HCT116 (cell line): ENCODE measurements at regions of chr15 and their contacts with region 1.

Region 1: DNA sequence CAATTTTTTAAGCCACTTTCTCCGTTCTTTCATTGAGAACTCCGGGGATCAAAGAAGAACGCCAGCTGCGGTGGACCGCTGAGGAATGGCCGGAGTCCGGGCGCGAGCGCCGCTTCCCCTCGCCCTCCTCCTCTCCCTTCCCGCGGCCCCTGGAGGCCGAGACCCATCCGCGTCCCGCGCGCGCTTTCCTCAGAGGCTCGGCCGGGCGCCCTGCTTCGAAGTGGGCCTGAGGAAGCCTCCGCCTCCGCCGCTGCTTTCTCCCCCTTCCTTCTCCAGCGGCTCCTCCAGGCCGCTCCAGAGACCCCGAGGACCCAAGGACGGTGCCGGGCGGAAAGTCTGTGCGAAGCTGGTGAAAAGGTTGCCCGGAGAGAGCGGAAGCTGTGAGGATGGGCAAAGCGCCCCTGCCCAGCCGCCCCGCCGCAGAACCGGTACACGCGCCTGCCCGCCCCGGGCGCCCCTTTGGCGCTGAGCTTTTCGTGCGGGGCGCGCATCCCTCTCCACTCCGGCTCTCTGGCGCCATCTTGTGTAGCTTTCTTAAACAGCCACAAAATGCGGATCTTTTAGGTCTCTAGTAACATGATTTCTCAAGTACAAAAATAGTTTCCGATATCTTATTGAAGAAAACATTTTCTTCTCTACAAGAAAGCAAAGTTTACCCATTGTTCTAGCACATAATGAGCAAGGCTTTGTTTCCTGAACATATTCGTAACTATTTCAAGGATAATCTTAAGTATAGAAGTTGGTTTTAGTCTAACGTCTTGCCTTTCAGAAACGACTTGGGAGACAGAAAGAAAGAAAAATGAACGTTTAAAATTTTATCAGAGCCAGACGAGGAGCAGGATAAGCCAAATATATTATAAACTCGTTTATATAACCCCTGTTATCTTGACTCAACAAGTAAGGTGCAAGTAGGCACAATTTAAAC is 59.2 kb upstream of the FAM174B start:
- DNase-seq: peak; percentile 33
- ATAC-seq: peak; percentile 94
- H3K4me3 ChIP-seq: peak overlapping the region in 1 of 2 experiments; percentile 0; a peak in 1 of 4 replicates
- H3K27ac ChIP-seq: no peak overlapping the region
- H3K4me1 ChIP-seq: 0 out of 4 replicates have a peak, but pooled peaks cover 0 to 3% of the 10 kb centered on the region in 2 experiments
- H3K27me3 ChIP-seq: no peaks in the 10 kb centered on the region
- CTCF ChIP-seq: peak; percentile 82 to 93 (median 83)
- POLR2A ChIP-seq: no peak
- RAD21 ChIP-seq: peak; percentile 89

Region 2: DNA sequence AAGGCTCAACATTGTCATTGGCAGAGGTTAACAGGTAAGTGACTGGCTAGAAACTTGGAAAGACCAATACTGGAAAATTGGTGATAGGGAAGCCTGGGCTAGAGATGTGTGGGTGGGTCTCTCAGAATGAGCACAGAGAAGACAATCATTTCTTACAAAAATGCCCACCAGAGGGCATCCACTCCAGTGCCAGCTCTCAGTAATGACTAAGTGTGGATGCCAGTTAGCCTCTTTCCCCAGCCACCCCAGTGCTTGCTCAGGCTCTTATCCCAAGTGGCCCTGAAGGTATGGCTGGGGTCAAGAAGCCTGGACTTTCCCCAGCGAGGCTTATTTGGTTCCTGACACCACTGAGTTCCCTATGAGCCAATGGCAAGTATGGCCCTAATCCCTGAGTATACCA is 437.0 kb before region 1 on chr15:
- CTCF ChIA-PET with region 1: no interaction called
- POLR2A ChIA-PET with region 1: no interaction called
- RAD21 ChIA-PET with region 1: no interaction called
- intact Hi-C with region 1: loop called (anchors 2 kb)
- DNase-seq: peak; percentile 12
- ATAC-seq: peak; percentile 91
- H3K4me3 ChIP-seq: no peak overlapping the region
- H3K27ac ChIP-seq: no peak overlapping the region
- H3K4me1 ChIP-seq: no peaks in the 10 kb centered on the region
- H3K27me3 ChIP-seq: peaks cover 39% of the 10 kb centered on the region; the same call in 1 of the 2 replicates
- CTCF ChIP-seq: peak; percentile 26 to 47 (median 43); a peak in 4 of 6 replicates
- POLR2A ChIP-seq: no peak
- RAD21 ChIP-seq: peak; percentile 28; the same call in 1 of the 2 replicates

Region 3: GRCh38 chr15:92391640-92392039 is 323.1 kb before region 1 on chr15:
- CTCF ChIA-PET with region 1: interaction called, 12 read pairs
- POLR2A ChIA-PET with region 1: no interaction called
- RAD21 ChIA-PET with region 1: no interaction called
- intact Hi-C with region 1: loop called (anchors 1 kb)
- DNase-seq: peak; percentile 36
- ATAC-seq: peak; percentile 95
- H3K4me3 ChIP-seq: no peak overlapping the region
- H3K27ac ChIP-seq: no peak overlapping the region
- H3K4me1 ChIP-seq: no peaks in the 10 kb centered on the region
- H3K27me3 ChIP-seq: peaks cover 47% of the 10 kb centered on the region; the same call in 1 of the 2 replicates
- CTCF ChIP-seq: peak; percentile 68 to 80 (median 71)
- POLR2A ChIP-seq: no peak
- RAD21 ChIP-seq: peak; percentile 62

Region 4: DNA sequence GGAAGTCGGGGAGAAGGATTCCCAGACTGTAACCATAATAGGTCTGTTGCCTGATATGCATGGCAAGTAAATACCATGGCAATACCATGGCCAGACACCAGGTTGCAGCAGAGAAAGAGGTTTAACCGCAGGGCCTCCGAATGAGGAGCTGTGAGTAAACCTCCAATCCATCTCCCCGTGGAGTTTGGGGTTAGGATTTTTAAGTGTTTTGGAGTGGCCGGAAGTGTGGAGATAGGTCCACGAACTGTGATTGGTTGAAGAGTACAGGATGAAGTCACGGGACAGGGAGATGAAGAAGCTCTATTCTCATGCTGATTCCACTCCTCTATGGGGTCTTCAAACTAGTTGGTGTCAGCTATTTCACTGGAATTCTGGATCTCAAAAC is 193.1 kb before region 1 on chr15:
- CTCF ChIA-PET with region 1: interaction called, 27 read pairs
- POLR2A ChIA-PET with region 1: no interaction called
- RAD21 ChIA-PET with region 1: interaction called, 3 to 6 read pairs
- intact Hi-C with region 1: loop called (anchors 1 kb)
- DNase-seq: peak; percentile 46
- ATAC-seq: peak; percentile 99
- H3K4me3 ChIP-seq: no peak overlapping the region
- H3K27ac ChIP-seq: no peak overlapping the region
- H3K4me1 ChIP-seq: no peaks in the 10 kb centered on the region
- H3K27me3 ChIP-seq: no peaks in the 10 kb centered on the region
- CTCF ChIP-seq: peak; percentile 53 to 70 (median 67); a peak in 5 of 6 replicates
- POLR2A ChIP-seq: no peak
- RAD21 ChIP-seq: peak; percentile 79

Region 5: GRCh38 chr15:92693691-92694331 is 20.9 kb before region 1 on chr15:
- CTCF ChIA-PET with region 1: interaction called, 3 read pairs
- POLR2A ChIA-PET with region 1: no interaction called
- RAD21 ChIA-PET with region 1: interaction called, 3 read pairs
- intact Hi-C with region 1: loop called (anchors 1 kb)
- DNase-seq: peak; percentile 34
- ATAC-seq: peak; percentile 99
- H3K4me3 ChIP-seq: no peak overlapping the region
- H3K27ac ChIP-seq: no peak overlapping the region
- H3K4me1 ChIP-seq: no peaks in the 10 kb centered on the region
- H3K27me3 ChIP-seq: peaks cover 6% of the 10 kb centered on the region; the same call in 1 of the 2 replicates
- CTCF ChIP-seq: peak; percentile 40 to 82 (median 67); a peak in 5 of 6 replicates
- POLR2A ChIP-seq: no peak
- RAD21 ChIP-seq: peak; percentile 48

Region 6: DNA sequence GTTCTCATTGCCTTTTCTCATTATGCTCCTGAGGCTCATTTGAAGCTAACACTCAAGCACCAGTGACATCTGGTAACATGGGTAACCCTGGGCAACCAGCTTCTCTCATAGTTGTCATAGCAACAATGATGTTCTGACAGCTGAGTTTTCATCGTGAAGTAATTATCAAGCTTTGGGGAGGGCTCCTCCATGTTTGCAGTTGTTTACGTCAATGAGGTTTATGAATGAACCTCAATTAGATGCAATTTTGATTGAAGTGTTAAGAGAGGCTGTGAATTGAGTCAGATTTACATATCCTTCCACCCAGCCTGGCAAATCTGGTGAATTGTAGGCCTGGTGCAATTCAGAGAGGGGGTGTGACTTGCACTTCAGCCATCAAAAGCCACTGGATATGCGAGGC is 66.1 kb after region 1 on chr15:
- CTCF ChIA-PET with region 1: no interaction called
- POLR2A ChIA-PET with region 1: no interaction called
- RAD21 ChIA-PET with region 1: no interaction called
- intact Hi-C with region 1: no loop called
- DNase-seq: no peak
- ATAC-seq: no peak
- H3K4me3 ChIP-seq: no peak overlapping the region
- H3K27ac ChIP-seq: no peak overlapping the region
- H3K4me1 ChIP-seq: no peaks in the 10 kb centered on the region
- H3K27me3 ChIP-seq: no peaks in the 10 kb centered on the region
- CTCF ChIP-seq: no peak
- POLR2A ChIP-seq: no peak
- RAD21 ChIP-seq: no peak